Astrocyte of the cerebellum (primary cell): ENCODE measurements at regions of chr1 and their contacts with region 1.

Region 1: GRCh38 chr1:170680428-170680827 is 16.5 kb downstream of the PRRX1 start:
- DNase-seq: peak; percentile 76
- H3K4me3 ChIP-seq: no peak overlapping the region
- CTCF ChIP-seq: no peak

Region 2: GRCh38 chr1:170729225-170730002 is 49.0 kb after region 1 on chr1:
- in situ Hi-C with region 1: loop called (anchors 5 kb)
- DNase-seq: no peak
- H3K4me3 ChIP-seq: no peak overlapping the region
- CTCF ChIP-seq: no peak

Region 3: GRCh38 chr1:170739803-170740202 is 59.4 kb after region 1 on chr1:
- in situ Hi-C with region 1: no loop called
- DNase-seq: no peak
- H3K4me3 ChIP-seq: no peak overlapping the region
- CTCF ChIP-seq: no peak